Vagina (tissue), 2 donors: ENCODE measurements at regions of chr17 and their contacts with region 1.

Region 1: GRCh38 chr17:58006924-58007780 is at the start of gene SRSF1:
- DNase-seq: peak; percentile 97 to 98
- H3K4me3 ChIP-seq: peak within 1 kb of the TSS; percentile 85 to 86
- H3K27ac ChIP-seq: peak within 1 kb of the TSS; percentile 97
- H3K4me1 ChIP-seq: peaks cover 47% of the 10 kb centered on the region
- H3K27me3 ChIP-seq: no peaks in the 10 kb centered on the region
- CTCF ChIP-seq: no peak
- POLR2A ChIP-seq: peak in 1 of 2 donors; percentile 93
- total RNA-seq, gene SRSF1: 155 TPM

Region 2: DNA sequence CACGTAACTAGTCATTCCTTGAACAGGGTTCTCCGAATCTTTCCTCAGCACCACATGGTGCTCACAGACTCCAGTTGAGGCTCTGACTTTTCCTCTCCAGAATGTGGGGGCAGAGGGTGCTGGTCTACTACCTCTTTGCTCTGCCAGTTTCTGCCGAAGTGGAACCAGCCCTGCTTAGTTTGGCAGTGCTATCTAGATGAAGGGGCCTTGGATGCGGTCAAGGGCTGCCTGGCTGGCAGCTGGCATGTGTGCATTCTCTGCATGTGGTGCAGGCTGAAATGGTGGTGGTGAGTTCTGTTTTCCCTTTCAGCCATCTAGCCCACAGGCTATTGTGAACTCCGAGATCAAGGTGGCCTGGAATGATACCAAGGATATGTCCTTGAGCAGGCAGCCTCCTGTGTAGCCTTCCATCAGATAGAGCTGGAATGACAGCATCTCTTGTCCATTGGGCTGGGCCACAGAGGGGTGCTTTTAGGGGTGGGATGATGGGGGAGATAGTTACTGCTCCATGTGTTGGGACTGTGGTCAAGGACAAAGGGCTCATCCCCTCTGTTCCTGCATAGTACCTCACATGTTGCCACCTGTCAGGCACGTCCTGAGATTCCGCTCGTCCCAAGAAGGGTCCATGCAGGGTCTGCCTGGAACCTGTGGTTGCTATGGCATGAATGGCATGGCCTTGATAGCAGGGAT is 78.0 kb after region 1 on chr17:
- intact Hi-C with region 1: loop called (anchors 5 kb)
- DNase-seq: peak in 1 of 2 donors; percentile 94
- H3K4me3 ChIP-seq: peak overlapping the region; percentile 94 to 100
- H3K27ac ChIP-seq: no peak overlapping the region
- H3K4me1 ChIP-seq: peaks cover 50% of the 10 kb centered on the region
- H3K27me3 ChIP-seq: no peaks in the 10 kb centered on the region
- CTCF ChIP-seq: no peak
- POLR2A ChIP-seq: no peak

Region 3: GRCh38 chr17:58148609-58149008 is 141.5 kb after region 1 on chr17:
- intact Hi-C with region 1: no loop called
- DNase-seq: no peak
- H3K4me3 ChIP-seq: no peak overlapping the region
- H3K27ac ChIP-seq: no peak overlapping the region
- H3K4me1 ChIP-seq: no peaks in the 10 kb centered on the region
- H3K27me3 ChIP-seq: no peaks in the 10 kb centered on the region
- CTCF ChIP-seq: no peak
- POLR2A ChIP-seq: no peak